Motor neuron (in vitro differentiated cells): ENCODE measurements at regions of chr11 and their contacts with region 1.

Region 1: DNA sequence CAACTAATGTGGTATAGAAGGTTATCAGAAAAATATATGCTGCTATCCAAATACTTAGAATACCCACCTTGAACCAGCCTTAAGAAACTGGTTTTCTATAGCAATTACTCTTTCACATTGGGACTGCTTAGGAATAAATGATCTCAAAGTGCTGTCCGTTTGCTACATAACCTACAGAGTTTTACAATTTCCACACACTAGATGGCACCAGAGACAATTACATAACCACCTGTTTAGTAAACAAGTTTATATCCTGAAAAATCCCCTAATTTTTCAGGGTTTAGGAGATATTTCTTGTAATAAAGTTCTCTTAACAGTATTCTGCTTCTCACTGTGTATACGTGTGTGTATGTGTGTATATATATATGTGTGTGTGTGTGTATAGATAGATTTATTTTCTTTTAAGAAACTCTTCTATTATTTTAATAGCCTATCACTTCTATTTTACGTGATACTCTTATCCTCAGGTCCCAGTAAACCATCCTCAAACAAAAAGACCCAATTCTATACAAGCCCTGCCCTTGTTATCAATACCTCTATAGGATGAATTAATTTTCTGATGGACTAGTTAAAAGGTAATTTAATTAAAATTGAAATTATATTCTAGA is 6.7 kb upstream of the OR5I1 start:
- ATAC-seq: peak in 4 of 8 experiments; percentile 27 to 60 (median 53)
- H3K4me3 ChIP-seq: no peak overlapping the region
- H3K27ac ChIP-seq: no peak overlapping the region
- H3K4me1 ChIP-seq: no peaks in the 10 kb centered on the region

Region 2: GRCh38 chr11:56776809-56777208 is 833.9 kb after region 1 on chr11:
- in situ Hi-C with region 1: loop called in 6 of 9 experiments (anchors 10 to 25 kb)
- ATAC-seq: no peak
- H3K4me3 ChIP-seq: no peak overlapping the region
- H3K27ac ChIP-seq: no peak overlapping the region
- H3K4me1 ChIP-seq: no peaks in the 10 kb centered on the region

Region 3: GRCh38 chr11:56783448-56784041 is 840.7 kb after region 1 on chr11:
- in situ Hi-C with region 1: loop called in 6 of 9 experiments (anchors 10 to 25 kb)
- ATAC-seq: peak in 3 of 8 experiments; percentile 38 to 60 (median 59)
- H3K4me3 ChIP-seq: no peak overlapping the region
- H3K27ac ChIP-seq: no peak overlapping the region
- H3K4me1 ChIP-seq: no peaks in the 10 kb centered on the region